AG04449 (cell line): ENCODE measurements at regions of chr1 and their contacts with region 1.

Region 1: GRCh38 chr1:205591522-205592351 is 40.1 kb downstream of the ELK4 start:
- DNase-seq: no peak
- H3K4me3 ChIP-seq: peak overlapping the region; percentile 52
- CTCF ChIP-seq: peak; percentile 100

Region 2: GRCh38 chr1:205523891-205524793 is 67.6 kb before region 1 on chr1:
- CTCF ChIA-PET with region 1: interaction called, 20 read pairs
- POLR2A ChIA-PET with region 1: no interaction called
- DNase-seq: no peak
- H3K4me3 ChIP-seq: no peak overlapping the region
- CTCF ChIP-seq: peak; percentile 82

Region 3: DNA sequence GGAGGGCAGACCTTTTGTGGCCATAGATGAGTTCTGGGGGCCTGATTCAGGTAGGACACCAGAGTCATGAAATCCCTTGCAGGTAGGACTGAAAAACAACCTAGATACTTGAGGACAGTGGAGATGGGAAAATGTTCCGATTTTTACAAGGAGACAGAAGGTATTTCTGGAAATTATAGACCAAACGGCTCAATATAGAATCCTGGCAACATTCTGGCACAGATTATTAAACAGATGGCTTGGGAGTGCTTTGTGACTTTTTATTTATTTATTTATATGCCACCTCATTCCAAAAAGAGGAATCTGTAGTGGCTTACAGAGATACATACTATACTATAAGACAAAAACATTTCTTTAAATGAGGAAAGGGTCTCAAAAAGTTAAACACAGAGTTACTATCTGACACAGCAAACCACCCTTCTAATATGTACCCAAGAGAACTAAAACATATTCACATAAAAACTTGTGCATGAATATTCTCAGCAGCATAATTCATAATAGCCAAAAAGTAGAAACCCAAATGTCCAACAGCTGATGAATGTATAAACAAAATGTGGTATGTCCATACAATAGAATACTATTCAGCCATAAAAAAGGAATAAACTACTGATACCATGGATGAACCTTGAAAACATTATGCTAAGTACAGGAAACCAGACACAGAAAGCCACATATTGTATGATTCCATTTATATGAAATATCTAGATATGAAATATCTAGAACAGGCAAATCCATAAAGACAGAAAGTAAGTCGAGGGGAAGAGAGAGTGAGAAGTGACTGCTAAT is 37.5 kb before region 1 on chr1:
- CTCF ChIA-PET with region 1: interaction called, 12 read pairs
- POLR2A ChIA-PET with region 1: no interaction called
- DNase-seq: no peak
- H3K4me3 ChIP-seq: no peak overlapping the region
- CTCF ChIP-seq: no peak

Region 4: GRCh38 chr1:205610036-205610435 is 18.3 kb after region 1 on chr1:
- CTCF ChIA-PET with region 1: interaction called, 22 read pairs
- POLR2A ChIA-PET with region 1: no interaction called
- DNase-seq: no peak
- H3K4me3 ChIP-seq: no peak overlapping the region
- CTCF ChIP-seq: no peak

Region 5: GRCh38 chr1:205639567-205639966 is 47.8 kb after region 1 on chr1:
- CTCF ChIA-PET with region 1: interaction called, 31 read pairs
- POLR2A ChIA-PET with region 1: no interaction called
- DNase-seq: no peak
- H3K4me3 ChIP-seq: no peak overlapping the region
- CTCF ChIP-seq: no peak

Region 6: DNA sequence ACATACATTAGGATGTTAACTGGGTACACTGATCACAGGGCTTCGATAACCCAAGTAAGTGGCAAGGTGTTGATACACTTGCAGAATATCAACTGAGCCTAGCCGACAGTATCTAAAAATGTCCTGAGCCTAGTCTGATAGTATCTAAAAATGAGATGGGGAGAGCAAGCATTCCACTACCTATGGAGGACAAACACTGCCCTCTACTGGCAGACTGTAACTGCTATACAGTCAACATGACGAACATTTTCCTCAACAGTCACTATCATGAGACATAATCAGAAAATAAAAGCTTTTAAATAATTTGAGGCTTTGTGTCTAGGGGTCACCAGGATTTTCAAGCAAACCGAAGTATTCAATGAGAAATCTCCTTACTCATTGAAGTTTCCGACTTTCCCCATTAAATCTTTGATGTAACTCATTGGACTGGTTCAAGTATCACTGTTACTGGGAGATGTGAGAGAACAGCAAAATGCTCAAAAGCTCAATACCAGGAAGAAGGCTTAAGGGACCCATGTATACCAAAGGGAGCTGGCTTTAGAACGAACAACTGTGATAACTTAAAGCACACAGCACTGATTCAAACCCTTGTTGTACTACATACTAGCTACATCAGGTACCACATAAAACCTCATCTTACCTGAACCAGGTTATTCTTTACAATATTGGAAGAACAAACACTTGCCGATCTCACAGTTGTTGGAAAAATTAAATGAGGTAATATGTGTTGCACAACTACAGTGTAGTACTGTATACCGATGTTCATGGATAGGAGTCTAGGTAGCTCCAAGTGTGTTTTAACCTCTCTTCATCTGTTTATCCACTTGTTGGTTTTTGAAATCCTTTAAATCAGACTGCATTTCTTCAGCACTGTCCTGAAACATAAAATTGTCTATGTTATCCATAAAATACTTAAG is 119.6 kb after region 1 on chr1:
- CTCF ChIA-PET with region 1: interaction called, 132 read pairs
- POLR2A ChIA-PET with region 1: no interaction called
- DNase-seq: peak; percentile 31
- H3K4me3 ChIP-seq: no peak overlapping the region
- CTCF ChIP-seq: peak; percentile 77